B cell (primary cell): ENCODE measurements at regions of chr2 and their contacts with region 1.

Region 1: GRCh38 chr2:102240640-102241370 is 54.0 kb downstream of the IL1RL2 start:
- DNase-seq: peak; percentile 88
- ATAC-seq: peak; percentile 89
- H3K4me3 ChIP-seq: peak overlapping the region in 1 of 5 experiments; percentile 11
- H3K4me3 Mint-ChIP-seq: peak overlapping the region; percentile 40
- H3K27ac ChIP-seq: no peak overlapping the region
- H3K27ac Mint-ChIP-seq: peak overlapping the region; percentile 4
- H3K4me1 ChIP-seq: peaks cover 7 to 16% of the 10 kb centered on the region in 2 donors
- H3K4me1 Mint-ChIP-seq: peaks cover 24% of the 10 kb centered on the region
- H3K27me3 ChIP-seq: peaks cover 0 to 3% (median 3%) of the 10 kb centered on the region in 4 experiments
- H3K27me3 Mint-ChIP-seq: peaks cover 17% of the 10 kb centered on the region
- CTCF ChIP-seq: peak; percentile 98

Region 2: GRCh38 chr2:100984892-100985379 is 1255.9 kb before region 1 on chr2:
- CTCF ChIA-PET with region 1: no interaction called
- POLR2A ChIA-PET with region 1: no interaction called
- intact Hi-C with region 1: no loop called
- DNase-seq: peak; percentile 83
- ATAC-seq: peak; percentile 81
- H3K4me3 ChIP-seq: no peak overlapping the region
- H3K4me3 Mint-ChIP-seq: no peak overlapping the region
- H3K27ac ChIP-seq: no peak overlapping the region
- H3K27ac Mint-ChIP-seq: no peak overlapping the region
- H3K4me1 ChIP-seq: no peaks in the 10 kb centered on the region
- H3K4me1 Mint-ChIP-seq: no peaks in the 10 kb centered on the region
- H3K27me3 ChIP-seq: peaks cover 0 to 4% (median 3%) of the 10 kb centered on the region in 4 experiments
- H3K27me3 Mint-ChIP-seq: peaks cover 13% of the 10 kb centered on the region
- CTCF ChIP-seq: peak; percentile 93

Region 3: GRCh38 chr2:101341901-101342624 is 898.7 kb before region 1 on chr2:
- CTCF ChIA-PET with region 1: interaction called, 14 read pairs
- POLR2A ChIA-PET with region 1: no interaction called
- intact Hi-C with region 1: loop called (anchors 2 kb)
- DNase-seq: peak; percentile 73
- ATAC-seq: peak; percentile 56
- H3K4me3 ChIP-seq: no peak overlapping the region
- H3K4me3 Mint-ChIP-seq: no peak overlapping the region
- H3K27ac ChIP-seq: no peak overlapping the region
- H3K27ac Mint-ChIP-seq: no peak overlapping the region
- H3K4me1 ChIP-seq: peaks cover 0 to 8% of the 10 kb centered on the region in 2 donors
- H3K4me1 Mint-ChIP-seq: peaks cover 7% of the 10 kb centered on the region
- H3K27me3 ChIP-seq: no peaks in the 10 kb centered on the region
- H3K27me3 Mint-ChIP-seq: peaks cover 2% of the 10 kb centered on the region
- CTCF ChIP-seq: peak; percentile 90

Region 4: DNA sequence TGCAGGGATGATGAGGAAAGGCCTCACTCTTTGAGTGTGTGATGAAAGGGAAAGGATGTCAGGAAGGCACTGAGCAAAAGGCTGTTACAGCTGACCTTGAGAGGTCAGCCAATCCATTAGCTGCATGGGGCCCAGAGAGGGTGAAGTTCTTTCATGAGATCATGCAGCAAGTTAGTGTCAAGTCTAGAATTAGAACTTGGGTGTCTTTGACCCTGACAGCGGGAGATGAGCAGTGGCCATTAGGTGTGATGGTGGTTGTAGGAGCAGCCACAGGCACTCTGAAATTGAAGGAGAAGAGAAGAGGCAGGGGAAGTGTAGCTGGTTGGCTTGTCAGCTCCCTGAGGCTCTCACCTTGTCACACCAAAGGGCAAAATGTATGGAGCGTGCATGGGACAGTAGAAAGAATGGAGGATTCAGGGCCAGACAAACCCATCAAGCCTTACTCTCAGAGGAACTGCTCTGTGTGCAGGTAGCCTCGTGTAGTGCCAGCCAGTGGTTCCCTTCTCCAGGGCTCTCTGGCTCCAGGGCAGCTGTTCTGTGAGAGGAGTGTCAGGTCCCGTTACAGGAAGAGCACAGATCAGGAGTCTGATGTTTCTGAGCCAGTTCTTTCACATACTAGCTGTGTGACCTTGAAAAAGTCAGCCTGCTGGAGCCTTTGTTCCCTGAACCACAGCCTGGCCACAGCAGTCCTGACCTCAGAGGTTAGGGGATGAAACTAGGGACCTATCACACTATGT is 507.4 kb before region 1 on chr2:
- CTCF ChIA-PET with region 1: no interaction called
- POLR2A ChIA-PET with region 1: no interaction called
- intact Hi-C with region 1: no loop called
- DNase-seq: no peak
- ATAC-seq: no peak
- H3K4me3 ChIP-seq: no peak overlapping the region
- H3K4me3 Mint-ChIP-seq: peak overlapping the region; percentile 46
- H3K27ac ChIP-seq: peak overlapping the region in 1 of 2 donors; percentile 49
- H3K27ac Mint-ChIP-seq: peak overlapping the region; percentile 6
- H3K4me1 ChIP-seq: peaks cover 90 to 93% of the 10 kb centered on the region in 2 donors
- H3K4me1 Mint-ChIP-seq: peaks cover 92% of the 10 kb centered on the region
- H3K27me3 ChIP-seq: no peaks in the 10 kb centered on the region
- H3K27me3 Mint-ChIP-seq: no peaks in the 10 kb centered on the region
- CTCF ChIP-seq: no peak

Region 5: DNA sequence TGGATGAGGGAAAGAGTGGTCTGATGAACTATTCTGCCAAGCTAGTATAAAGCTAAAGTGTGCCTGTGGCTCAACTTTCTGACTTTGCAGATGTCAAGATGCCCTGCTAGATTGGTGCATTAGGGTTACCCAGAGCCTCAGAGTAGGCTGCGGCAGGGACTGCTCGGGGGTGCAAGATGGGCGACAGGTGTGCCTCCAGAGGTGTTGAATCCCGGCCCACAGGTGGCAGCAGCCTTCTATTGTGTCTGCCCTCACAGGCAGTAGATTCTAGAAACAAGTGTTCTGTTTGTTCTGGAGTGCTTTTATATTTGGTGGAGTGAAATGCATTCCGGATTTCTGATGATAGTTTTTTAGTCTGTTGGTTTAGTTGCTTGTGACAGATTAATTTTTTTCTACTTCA is 380.6 kb before region 1 on chr2:
- CTCF ChIA-PET with region 1: no interaction called
- POLR2A ChIA-PET with region 1: interaction called, 11 read pairs
- intact Hi-C with region 1: no loop called
- DNase-seq: no peak
- ATAC-seq: no peak
- H3K4me3 ChIP-seq: no peak overlapping the region
- H3K4me3 Mint-ChIP-seq: no peak overlapping the region
- H3K27ac ChIP-seq: no peak overlapping the region
- H3K27ac Mint-ChIP-seq: peak overlapping the region; percentile 38
- H3K4me1 ChIP-seq: no peaks in the 10 kb centered on the region
- H3K4me1 Mint-ChIP-seq: no peaks in the 10 kb centered on the region
- H3K27me3 ChIP-seq: no peaks in the 10 kb centered on the region
- H3K27me3 Mint-ChIP-seq: no peaks in the 10 kb centered on the region
- CTCF ChIP-seq: no peak

Region 6: DNA sequence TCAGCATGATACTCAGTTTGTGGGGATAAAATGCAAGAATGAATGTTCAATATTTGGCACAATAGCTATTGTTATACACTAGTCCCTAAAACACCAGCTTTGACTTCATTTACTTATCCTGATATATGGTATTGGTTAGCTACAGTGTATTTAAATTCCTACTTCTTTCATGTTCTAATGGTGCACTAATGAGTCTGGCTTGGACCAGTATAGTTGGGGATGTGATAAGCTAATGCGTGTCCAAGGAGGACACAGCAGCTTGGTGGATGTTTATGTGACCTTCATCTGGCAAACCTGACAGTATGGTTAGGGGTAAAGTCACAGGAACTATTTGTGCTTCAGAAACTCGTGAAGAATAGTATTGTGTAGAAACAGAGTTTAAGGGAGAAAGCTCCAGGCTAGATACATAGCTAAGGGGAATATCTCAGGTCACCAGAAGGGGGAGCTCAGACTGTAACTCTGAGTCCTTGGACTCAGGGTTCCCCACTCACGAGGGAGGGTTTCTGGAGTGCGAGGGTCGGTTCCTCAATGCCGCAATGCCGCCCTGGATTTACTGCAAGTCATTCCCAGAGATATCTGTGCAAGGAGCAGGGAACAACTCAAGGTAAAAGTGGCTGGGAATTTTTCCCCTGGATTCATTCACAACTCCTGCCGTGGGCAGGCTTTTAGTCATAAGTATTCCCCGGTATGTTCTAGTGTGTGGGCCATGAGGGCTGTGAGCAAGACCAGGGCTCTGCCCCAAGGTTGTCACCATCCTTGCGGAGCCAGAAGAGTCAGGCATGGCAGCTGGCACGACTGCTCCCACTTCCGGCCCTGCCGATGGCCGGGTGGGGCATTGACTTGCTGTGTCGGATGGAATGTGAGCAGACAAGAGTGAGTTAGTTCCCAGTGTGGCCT is 234.6 kb before region 1 on chr2:
- CTCF ChIA-PET with region 1: interaction called, 17 read pairs
- POLR2A ChIA-PET with region 1: no interaction called
- intact Hi-C with region 1: no loop called
- DNase-seq: peak; percentile 40
- ATAC-seq: no peak
- H3K4me3 ChIP-seq: no peak overlapping the region
- H3K4me3 Mint-ChIP-seq: no peak overlapping the region
- H3K27ac ChIP-seq: no peak overlapping the region
- H3K27ac Mint-ChIP-seq: no peak overlapping the region
- H3K4me1 ChIP-seq: peaks cover 0 to 9% of the 10 kb centered on the region in 2 donors
- H3K4me1 Mint-ChIP-seq: peaks cover 9% of the 10 kb centered on the region
- H3K27me3 ChIP-seq: peaks cover 0 to 6% (median 0%) of the 10 kb centered on the region in 4 experiments
- H3K27me3 Mint-ChIP-seq: peaks cover 5% of the 10 kb centered on the region
- CTCF ChIP-seq: peak; percentile 58

Region 7: GRCh38 chr2:102020596-102021181 is 220.1 kb before region 1 on chr2:
- CTCF ChIA-PET with region 1: interaction called, 113 read pairs
- POLR2A ChIA-PET with region 1: no interaction called
- intact Hi-C with region 1: no loop called
- DNase-seq: peak; percentile 80
- ATAC-seq: peak; percentile 97
- H3K4me3 ChIP-seq: no peak overlapping the region
- H3K4me3 Mint-ChIP-seq: no peak overlapping the region
- H3K27ac ChIP-seq: no peak overlapping the region
- H3K27ac Mint-ChIP-seq: no peak overlapping the region
- H3K4me1 ChIP-seq: peaks cover 0 to 3% of the 10 kb centered on the region in 2 donors
- H3K4me1 Mint-ChIP-seq: peaks cover 4% of the 10 kb centered on the region
- H3K27me3 ChIP-seq: peaks cover 0 to 8% (median 0%) of the 10 kb centered on the region in 4 experiments
- H3K27me3 Mint-ChIP-seq: peaks cover 5% of the 10 kb centered on the region
- CTCF ChIP-seq: peak; percentile 99

Region 8: GRCh38 chr2:102301867-102302362 is 61.1 kb after region 1 on chr2:
- CTCF ChIA-PET with region 1: no interaction called
- POLR2A ChIA-PET with region 1: no interaction called
- intact Hi-C with region 1: no loop called
- DNase-seq: peak; percentile 36
- ATAC-seq: no peak
- H3K4me3 ChIP-seq: no peak overlapping the region
- H3K4me3 Mint-ChIP-seq: no peak overlapping the region
- H3K27ac ChIP-seq: no peak overlapping the region
- H3K27ac Mint-ChIP-seq: no peak overlapping the region
- H3K4me1 ChIP-seq: peaks cover 0 to 3% of the 10 kb centered on the region in 2 donors
- H3K4me1 Mint-ChIP-seq: no peaks in the 10 kb centered on the region
- H3K27me3 ChIP-seq: peaks cover 0 to 12% (median 6%) of the 10 kb centered on the region in 4 experiments
- H3K27me3 Mint-ChIP-seq: peaks cover 39% of the 10 kb centered on the region
- CTCF ChIP-seq: peak; percentile 20

Region 9: DNA sequence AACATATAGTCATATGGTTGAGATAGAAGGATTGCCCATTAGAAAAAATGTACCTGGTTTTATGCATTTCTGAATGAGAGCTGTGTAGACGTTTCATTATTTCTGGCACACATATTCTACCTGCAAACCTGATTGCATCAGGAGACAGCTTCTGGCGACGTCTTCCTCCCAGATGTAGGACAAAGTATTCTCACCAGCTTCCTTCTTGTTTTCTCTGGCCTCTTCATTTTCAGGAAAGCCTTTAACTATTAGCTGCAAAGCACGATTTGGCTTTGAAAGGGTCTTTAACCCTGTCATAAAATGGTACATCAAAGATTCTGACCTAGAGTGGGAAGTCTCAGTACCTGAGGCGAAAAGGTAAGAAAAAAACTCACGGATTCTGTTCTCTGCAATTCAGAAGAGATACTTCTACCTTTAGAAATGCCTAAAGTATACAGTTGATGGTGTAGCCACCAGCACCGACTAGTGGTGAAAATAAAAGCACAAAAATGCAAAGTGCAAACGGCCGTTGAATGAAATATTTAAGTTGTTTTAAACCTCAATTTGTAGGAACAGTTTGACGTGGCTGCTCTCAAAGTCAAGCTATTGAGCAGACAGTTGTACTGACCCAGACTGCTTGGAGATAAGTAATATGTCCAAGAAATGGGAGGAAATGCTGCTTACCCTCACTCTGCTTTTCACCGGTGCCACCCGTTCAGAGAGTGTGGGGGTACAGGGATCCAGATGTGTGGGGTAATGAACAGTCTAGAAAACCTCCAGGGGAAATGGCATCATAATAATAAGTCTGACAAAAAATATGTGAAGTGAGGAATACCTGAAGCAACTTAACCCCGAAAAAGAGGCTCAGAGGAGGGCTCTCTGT is 202.4 kb after region 1 on chr2:
- CTCF ChIA-PET with region 1: interaction called, 38 read pairs
- POLR2A ChIA-PET with region 1: no interaction called
- intact Hi-C with region 1: no loop called
- DNase-seq: peak; percentile 65
- ATAC-seq: no peak
- H3K4me3 ChIP-seq: no peak overlapping the region
- H3K4me3 Mint-ChIP-seq: no peak overlapping the region
- H3K27ac ChIP-seq: no peak overlapping the region
- H3K27ac Mint-ChIP-seq: no peak overlapping the region
- H3K4me1 ChIP-seq: peaks cover 0 to 5% of the 10 kb centered on the region in 2 donors
- H3K4me1 Mint-ChIP-seq: peaks cover 3% of the 10 kb centered on the region
- H3K27me3 ChIP-seq: no peaks in the 10 kb centered on the region
- H3K27me3 Mint-ChIP-seq: no peaks in the 10 kb centered on the region
- CTCF ChIP-seq: peak; percentile 82